A673 (cell line): ENCODE measurements at regions of chr14 and their contacts with region 1.

Region 1: GRCh38 chr14:52694761-52695480 is 437 bp downstream of the ERO1A start:
- DNase-seq: peak; percentile 36
- H3K4me3 ChIP-seq: peak overlapping the region; percentile 96
- H3K27ac ChIP-seq: peak overlapping the region; percentile 89
- H3K4me1 ChIP-seq: peaks cover 26% of the 10 kb centered on the region
- H3K27me3 ChIP-seq: no peaks in the 10 kb centered on the region
- CTCF ChIP-seq: no peak

Region 2: GRCh38 chr14:52552063-52552988 is 142.6 kb before region 1 on chr14 and contains the starts of genes GPR137C and TXNDC16:
- CTCF ChIA-PET with region 1: no interaction called
- POLR2A ChIA-PET with region 1: no interaction called
- intact Hi-C with region 1: loop called (anchors 5 kb)
- DNase-seq: peak; percentile 100
- H3K4me3 ChIP-seq: peak within 1 kb of the TSS; percentile 81
- H3K27ac ChIP-seq: peak within 1 kb of the TSS; percentile 56
- H3K4me1 ChIP-seq: peaks cover 17% of the 10 kb centered on the region
- H3K27me3 ChIP-seq: no peaks in the 10 kb centered on the region
- CTCF ChIP-seq: no peak
- total RNA-seq, gene GPR137C: 2.4 and 2.8 TPM in 2 replicates
- total RNA-seq, gene TXNDC16: 3.4 and 4.8 TPM in 2 replicates

Region 3: DNA sequence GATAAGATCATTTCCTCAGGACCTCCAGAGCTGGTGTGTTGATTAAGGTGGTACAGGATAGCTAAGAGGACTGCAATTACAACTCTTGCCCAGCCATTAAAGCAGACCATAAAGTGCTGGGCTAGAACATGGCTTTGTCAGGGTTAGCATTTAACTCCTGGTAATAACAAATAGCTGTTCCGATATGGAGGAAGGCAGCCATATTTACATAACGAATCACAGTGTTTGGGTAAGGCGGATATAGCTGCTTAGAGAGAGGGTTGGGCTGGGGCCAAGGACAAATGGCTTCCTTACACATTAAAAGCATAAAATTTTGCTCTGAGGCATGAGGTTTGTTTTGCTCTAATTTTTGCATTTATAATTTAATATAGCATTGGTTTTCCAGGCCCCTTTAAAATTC is 756.0 kb after region 1 on chr14:
- CTCF ChIA-PET with region 1: no interaction called
- POLR2A ChIA-PET with region 1: no interaction called
- intact Hi-C with region 1: no loop called
- DNase-seq: no peak
- H3K4me3 ChIP-seq: no peak overlapping the region
- H3K27ac ChIP-seq: no peak overlapping the region
- H3K4me1 ChIP-seq: no peaks in the 10 kb centered on the region
- H3K27me3 ChIP-seq: peaks cover 6% of the 10 kb centered on the region
- CTCF ChIP-seq: no peak